Activated CD8-positive, alpha-beta T cell treated with anti-CD3 and anti-CD28 coated beads for 36 hours (primary cell): ENCODE measurements at regions of chr7 and their contacts with region 1.

Region 1: DNA sequence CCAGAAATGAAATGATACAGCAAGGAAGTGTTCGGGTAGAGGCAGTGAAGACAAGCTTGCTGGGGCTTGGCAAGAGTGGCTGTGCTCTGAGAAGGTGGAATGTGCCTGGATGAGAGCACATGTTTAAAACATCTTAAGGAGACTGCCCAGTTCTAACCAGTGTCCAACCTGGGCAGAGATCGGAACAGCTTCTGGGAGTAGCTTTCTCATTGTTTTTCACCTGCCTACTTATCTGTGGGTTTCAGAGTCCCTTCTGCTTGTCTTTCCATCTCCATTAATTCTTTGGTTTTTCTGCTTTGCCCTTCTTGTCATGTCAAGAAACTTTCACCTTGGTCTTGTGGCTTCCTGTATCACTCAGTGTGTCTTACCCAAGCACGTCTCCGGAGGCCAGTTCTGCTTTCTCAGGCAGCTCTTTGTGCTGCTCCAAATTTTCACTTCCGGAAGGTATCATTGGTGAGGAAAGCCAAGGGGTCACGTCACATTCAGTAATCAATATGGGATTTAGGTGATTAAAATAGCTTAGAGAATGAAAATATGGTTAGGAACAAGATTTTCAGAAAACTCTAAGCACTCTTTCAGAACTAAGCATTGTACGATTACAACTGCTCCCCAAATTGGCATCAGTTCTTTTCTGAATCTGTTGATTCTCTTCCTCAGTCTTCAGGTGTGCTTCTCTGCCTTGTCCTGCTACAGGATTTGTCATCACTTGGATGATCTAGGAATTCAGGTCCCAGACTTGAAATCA is 5.5 kb upstream of the LAMB4 start:
- DNase-seq: peak; percentile 74
- ATAC-seq: peak; percentile 87
- H3K4me3 Mint-ChIP-seq: peak overlapping the region; percentile 34
- H3K27ac Mint-ChIP-seq: peak overlapping the region; percentile 96
- H3K4me1 Mint-ChIP-seq: peaks cover 30% of the 10 kb centered on the region
- H3K27me3 Mint-ChIP-seq: peaks cover 12% of the 10 kb centered on the region
- CTCF ChIP-seq: no peak

Region 2: DNA sequence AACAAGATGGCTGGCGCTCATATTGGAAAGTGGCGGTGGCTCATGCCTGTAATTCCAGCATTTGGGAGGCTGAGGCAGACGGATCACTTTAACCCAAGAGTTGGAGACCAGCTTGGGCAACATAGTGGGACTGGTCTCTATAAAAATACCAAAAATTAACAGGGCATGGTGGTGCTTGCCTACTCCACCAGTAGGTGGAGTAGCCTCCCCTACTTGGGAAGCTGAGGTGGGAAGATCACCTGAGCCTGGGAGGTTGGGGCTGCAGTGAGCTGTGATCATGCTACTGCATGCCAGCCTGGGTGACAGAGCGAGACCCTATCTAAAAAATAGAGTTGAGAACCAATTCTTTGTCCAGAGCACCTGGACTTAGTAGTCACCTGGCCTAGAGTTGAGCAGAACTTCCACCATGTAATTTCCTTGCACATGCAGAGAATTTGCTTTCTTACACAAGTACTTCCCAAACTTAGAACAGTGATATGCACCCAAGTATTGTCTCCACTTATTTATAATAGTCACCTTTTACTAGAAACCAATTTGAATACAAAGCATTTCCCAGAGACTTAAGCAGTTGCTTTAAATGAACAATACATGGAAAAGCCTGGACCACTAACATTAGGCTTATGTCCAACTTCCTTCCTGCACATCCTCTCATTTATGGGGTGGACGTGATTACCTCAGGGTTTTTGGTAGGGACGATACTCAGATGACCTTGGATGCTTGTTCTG is 21.3 kb before region 1 on chr7:
- CTCF ChIA-PET with region 1: interaction called, 12 read pairs
- POLR2A ChIA-PET with region 1: no interaction called
- intact Hi-C with region 1: no loop called
- DNase-seq: peak; percentile 48
- ATAC-seq: peak; percentile 84
- H3K4me3 Mint-ChIP-seq: no peak overlapping the region
- H3K27ac Mint-ChIP-seq: no peak overlapping the region
- H3K4me1 Mint-ChIP-seq: no peaks in the 10 kb centered on the region
- H3K27me3 Mint-ChIP-seq: no peaks in the 10 kb centered on the region
- CTCF ChIP-seq: peak; percentile 81